Calu3 (cell line): ENCODE measurements at regions of chr7 and their contacts with region 1.

Region 1: GRCh38 chr7:24825931-24826661 is 68.8 kb upstream of the GSDME start:
- DNase-seq: peak; percentile 94
- H3K4me3 Mint-ChIP-seq: peak overlapping the region; percentile 41
- H3K27ac Mint-ChIP-seq: peak overlapping the region; percentile 88
- H3K4me1 Mint-ChIP-seq: peaks cover 80% of the 10 kb centered on the region
- H3K27me3 Mint-ChIP-seq: no peaks in the 10 kb centered on the region
- CTCF ChIP-seq: no peak

Region 2: GRCh38 chr7:24842449-24843241 is 16.5 kb after region 1 on chr7:
- CTCF ChIA-PET with region 1: interaction called, 21 read pairs
- intact Hi-C with region 1: loop called (anchors 2 kb)
- DNase-seq: peak; percentile 50
- H3K4me3 Mint-ChIP-seq: peak overlapping the region; percentile 9
- H3K27ac Mint-ChIP-seq: peak overlapping the region; percentile 88
- H3K4me1 Mint-ChIP-seq: peaks cover 42% of the 10 kb centered on the region
- H3K27me3 Mint-ChIP-seq: no peaks in the 10 kb centered on the region
- CTCF ChIP-seq: no peak